Panc1 (cell line): ENCODE measurements at regions of chr19 and their contacts with region 1.

Region 1: GRCh38 chr19:42487032-42487797 is 41.1 kb downstream of the CEACAM1 start:
- DNase-seq: no peak
- ATAC-seq: no peak
- H3K4me3 ChIP-seq: no peak overlapping the region
- H3K27ac ChIP-seq: no peak overlapping the region
- H3K4me1 ChIP-seq: no peaks in the 10 kb centered on the region
- H3K27me3 ChIP-seq: no peaks in the 10 kb centered on the region
- CTCF ChIP-seq: no peak

Region 2: GRCh38 chr19:41706741-41707501 is 780.3 kb before region 1 on chr19:
- CTCF ChIA-PET with region 1: interaction called, 13 read pairs
- POLR2A ChIA-PET with region 1: no interaction called
- in situ Hi-C with region 1: no loop called
- intact Hi-C with region 1: no loop called
- DNase-seq: peak; percentile 43
- ATAC-seq: peak; percentile 97
- H3K4me3 ChIP-seq: peak overlapping the region; percentile 12 to 40; a peak in 2 of 4 replicates
- H3K27ac ChIP-seq: no peak overlapping the region
- H3K4me1 ChIP-seq: no peaks in the 10 kb centered on the region
- H3K27me3 ChIP-seq: no peaks in the 10 kb centered on the region; the same call in 1 of the 2 replicates
- CTCF ChIP-seq: peak; percentile 97

Region 3: GRCh38 chr19:42471554-42472249 is 15.5 kb before region 1 on chr19:
- CTCF ChIA-PET with region 1: no interaction called
- POLR2A ChIA-PET with region 1: no interaction called
- in situ Hi-C with region 1: no loop called
- intact Hi-C with region 1: no loop called
- DNase-seq: no peak
- ATAC-seq: no peak; the same call in 1 of the 2 replicates
- H3K4me3 ChIP-seq: no peak overlapping the region
- H3K27ac ChIP-seq: no peak overlapping the region
- H3K4me1 ChIP-seq: 0 out of 2 replicates have a peak, but pooled peaks cover 2% of the 10 kb centered on the region
- H3K27me3 ChIP-seq: no peaks in the 10 kb centered on the region
- CTCF ChIP-seq: no peak

Region 4: DNA sequence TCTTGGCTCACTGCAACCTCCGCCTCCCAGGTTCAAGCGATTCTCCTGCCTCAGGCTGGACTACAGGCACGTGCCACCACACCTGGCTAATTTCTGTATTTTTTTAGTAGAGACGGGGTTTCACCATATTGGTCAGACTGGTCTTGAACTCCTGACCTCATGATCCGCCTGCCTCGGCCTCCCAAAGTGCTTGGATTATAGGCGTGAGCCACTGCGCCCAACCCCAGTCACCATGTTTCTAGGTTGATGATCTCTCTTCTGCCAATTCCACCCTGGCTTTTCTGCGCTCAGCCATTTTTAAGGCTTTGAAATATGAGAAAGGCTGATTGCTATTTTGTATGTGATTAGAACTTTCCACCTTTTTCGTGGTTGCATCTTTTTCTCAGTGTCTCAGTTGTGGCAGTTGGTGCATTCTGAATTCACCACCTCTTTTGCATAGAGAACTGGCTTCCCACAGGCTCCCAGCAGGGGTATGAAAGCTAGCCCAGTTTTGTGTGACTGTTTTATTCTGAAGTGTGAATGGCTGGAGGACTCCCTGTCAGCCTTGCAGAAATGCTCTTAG is 25.6 kb after region 1 on chr19:
- CTCF ChIA-PET with region 1: no interaction called
- POLR2A ChIA-PET with region 1: no interaction called
- in situ Hi-C with region 1: no loop called
- intact Hi-C with region 1: no loop called
- DNase-seq: no peak
- ATAC-seq: no peak
- H3K4me3 ChIP-seq: no peak overlapping the region
- H3K27ac ChIP-seq: no peak overlapping the region
- H3K4me1 ChIP-seq: no peaks in the 10 kb centered on the region
- H3K27me3 ChIP-seq: no peaks in the 10 kb centered on the region
- CTCF ChIP-seq: no peak